ENCODE measurements at regions of chr10 and their contacts with region 1.

Region 1: GRCh38 chr10:47139121-47139520 is 160.9 kb upstream of the GDF10 start:
- DNase-seq: no peak
- H3K4me3 ChIP-seq: no peak overlapping the region
- CTCF ChIP-seq: no peak

Region 2: GRCh38 chr10:47116445-47116844 is 22.7 kb before region 1 on chr10:
- CTCF ChIA-PET with region 1: no interaction called
- POLR2A ChIA-PET with region 1: no interaction called
- DNase-seq: no peak
- H3K4me3 ChIP-seq: no peak overlapping the region
- CTCF ChIP-seq: no peak

Region 3: DNA sequence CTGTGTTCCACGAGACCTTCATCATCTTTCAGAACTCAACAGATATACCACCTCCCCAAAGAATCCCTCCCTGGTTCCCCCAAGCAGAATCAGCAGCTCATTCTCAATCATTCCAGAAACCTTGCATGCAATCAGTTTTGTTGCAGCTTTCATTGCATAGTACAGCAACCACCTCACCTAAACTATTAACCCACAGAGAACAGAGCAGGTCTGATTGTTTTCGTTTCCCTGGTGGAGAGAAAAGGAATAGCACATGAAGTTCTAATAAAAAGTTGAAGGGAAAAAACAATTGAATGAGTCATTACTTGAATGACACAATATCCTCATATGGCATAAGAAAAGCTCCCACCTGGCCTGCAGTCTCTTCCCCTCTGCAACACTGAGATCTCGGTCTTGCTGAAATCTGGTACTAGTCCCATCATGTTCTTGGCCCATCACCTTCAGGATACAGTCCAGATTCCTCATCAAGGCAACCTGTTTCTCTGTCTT is 13.8 kb after region 1 on chr10:
- CTCF ChIA-PET with region 1: interaction called, 11 read pairs
- POLR2A ChIA-PET with region 1: interaction called, 3 read pairs
- DNase-seq: no peak
- H3K4me3 ChIP-seq: no peak overlapping the region
- CTCF ChIP-seq: no peak

Region 4: DNA sequence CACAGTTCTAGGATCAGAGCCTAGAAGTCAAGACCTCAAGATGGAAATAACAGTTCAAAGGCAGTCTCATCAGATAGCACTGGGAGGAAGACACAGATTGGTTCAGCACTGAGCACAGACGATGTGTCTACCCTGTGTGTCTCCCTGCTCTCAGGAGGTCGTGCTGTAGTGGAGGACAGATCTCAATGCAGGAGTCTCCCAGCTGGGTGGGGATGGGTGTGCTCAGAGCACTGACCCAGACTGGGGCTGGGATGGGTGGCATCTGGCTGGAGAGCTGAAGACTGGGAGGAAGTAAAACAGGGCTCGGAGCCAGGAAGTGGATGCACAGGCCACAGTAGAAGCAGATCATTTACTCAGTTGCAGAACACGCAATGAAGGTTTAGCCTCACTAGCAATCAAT is 91.4 kb after region 1 on chr10:
- CTCF ChIA-PET with region 1: no interaction called
- POLR2A ChIA-PET with region 1: no interaction called
- DNase-seq: no peak
- H3K4me3 ChIP-seq: no peak overlapping the region
- CTCF ChIP-seq: no peak

Measured in AG04449 (cell line).